CD8-positive, alpha-beta T cell (primary cell): ENCODE measurements at regions of chr9 and their contacts with region 1.

Region 1: DNA sequence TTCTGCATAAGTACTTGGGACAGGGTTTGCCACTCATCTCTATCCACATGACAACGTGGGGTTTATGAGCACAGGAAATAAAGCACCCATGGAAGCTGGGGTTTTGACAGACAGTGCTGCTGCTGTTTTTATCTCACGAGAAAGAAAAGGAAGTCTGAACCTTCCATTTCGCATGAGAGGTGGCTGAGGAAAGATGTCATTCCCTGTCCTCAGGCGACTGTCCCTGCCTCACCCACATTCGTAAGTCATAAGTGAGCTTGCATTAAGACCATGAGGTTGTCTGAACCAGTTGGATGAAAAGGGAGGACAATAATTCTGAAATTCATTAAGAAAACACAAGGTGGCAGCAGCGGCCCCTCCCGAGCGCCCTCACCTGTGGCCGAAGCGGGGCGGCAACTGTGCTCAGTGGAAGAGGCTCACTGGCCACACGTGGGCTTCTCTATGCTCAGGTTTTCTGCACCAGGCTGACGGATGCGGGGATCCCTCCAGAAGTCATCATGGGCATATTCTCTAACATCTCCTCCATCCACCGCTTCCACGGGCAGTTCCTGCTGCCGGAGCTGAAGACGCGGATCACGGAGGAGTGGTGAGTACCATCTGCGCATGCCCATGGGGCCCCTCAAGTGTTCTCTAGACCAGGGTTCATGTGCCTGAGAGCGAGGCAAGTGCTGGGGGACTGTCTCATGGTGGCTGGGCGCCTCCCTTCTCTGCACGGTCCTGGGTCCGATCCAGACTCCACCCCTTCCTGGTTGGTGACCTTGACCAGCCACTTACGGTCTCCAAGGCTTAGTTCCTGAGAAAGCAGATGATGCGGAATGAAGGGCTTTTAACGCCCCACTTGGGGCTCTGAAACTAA is 54.7 kb upstream of the SUSD3 start:
- DNase-seq: peak in 8 of 9 experiments; percentile 41 to 80 (median 70)
- ATAC-seq: peak; percentile 77
- H3K4me3 ChIP-seq: no peak overlapping the region
- H3K4me3 Mint-ChIP-seq: peak overlapping the region; percentile 5
- H3K27ac ChIP-seq: peak overlapping the region; percentile 23 to 41
- H3K27ac Mint-ChIP-seq: peak overlapping the region; percentile 92
- H3K4me1 ChIP-seq: peaks cover 52% of the 10 kb centered on the region
- H3K4me1 Mint-ChIP-seq: peaks cover 54% of the 10 kb centered on the region
- H3K27me3 ChIP-seq: no peaks in the 10 kb centered on the region
- H3K27me3 Mint-ChIP-seq: no peaks in the 10 kb centered on the region
- CTCF ChIP-seq: peak; percentile 56

Region 2: DNA sequence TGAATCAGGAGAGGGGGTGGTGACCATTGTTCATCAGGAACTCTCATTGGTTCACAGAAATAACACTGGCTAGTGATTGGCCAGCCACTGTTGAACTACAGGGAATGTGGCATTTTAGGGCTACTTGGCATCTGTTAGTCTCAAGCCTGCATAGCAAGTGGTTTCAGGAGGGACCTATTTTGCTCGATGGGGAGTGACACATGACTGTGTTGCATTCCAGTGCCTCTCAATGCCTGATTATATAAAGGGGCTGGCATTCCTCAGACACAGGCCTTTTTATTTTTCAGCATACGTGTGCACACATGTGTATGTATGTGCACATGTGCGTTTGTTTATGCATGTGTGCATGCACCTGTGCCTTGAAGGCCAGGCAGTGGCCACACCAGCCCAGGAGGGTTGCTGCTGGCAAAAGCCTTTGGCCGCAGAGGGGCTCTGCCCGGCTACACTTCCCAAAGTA is 33.3 kb before region 1 on chr9:
- CTCF ChIA-PET with region 1: interaction called, 28 read pairs
- POLR2A ChIA-PET with region 1: interaction called, 30 read pairs
- intact Hi-C with region 1: loop called in 1 of 2 experiments (anchors 2 kb)
- DNase-seq: peak in 3 of 9 experiments; percentile 12 to 50 (median 39)
- ATAC-seq: no peak
- H3K4me3 ChIP-seq: peak overlapping the region in 1 of 2 experiments; percentile 59
- H3K4me3 Mint-ChIP-seq: peak overlapping the region; percentile 91
- H3K27ac ChIP-seq: peak overlapping the region; percentile 91 to 94
- H3K27ac Mint-ChIP-seq: peak overlapping the region; percentile 100
- H3K4me1 ChIP-seq: peaks cover 78% of the 10 kb centered on the region
- H3K4me1 Mint-ChIP-seq: peaks cover 80% of the 10 kb centered on the region
- H3K27me3 ChIP-seq: no peaks in the 10 kb centered on the region
- H3K27me3 Mint-ChIP-seq: no peaks in the 10 kb centered on the region
- CTCF ChIP-seq: no peak

Region 3: GRCh38 chr9:92992549-92992948 is 11.2 kb before region 1 on chr9:
- CTCF ChIA-PET with region 1: interaction called, 29 read pairs
- POLR2A ChIA-PET with region 1: interaction called, 6 read pairs
- intact Hi-C with region 1: no loop called
- DNase-seq: no peak
- ATAC-seq: peak; percentile 16
- H3K4me3 ChIP-seq: no peak overlapping the region
- H3K4me3 Mint-ChIP-seq: no peak overlapping the region
- H3K27ac ChIP-seq: peak overlapping the region in 1 of 2 experiments; percentile 27
- H3K27ac Mint-ChIP-seq: peak overlapping the region; percentile 82
- H3K4me1 ChIP-seq: peaks cover 53% of the 10 kb centered on the region
- H3K4me1 Mint-ChIP-seq: peaks cover 95% of the 10 kb centered on the region
- H3K27me3 ChIP-seq: no peaks in the 10 kb centered on the region
- H3K27me3 Mint-ChIP-seq: no peaks in the 10 kb centered on the region
- CTCF ChIP-seq: no peak

Region 4: DNA sequence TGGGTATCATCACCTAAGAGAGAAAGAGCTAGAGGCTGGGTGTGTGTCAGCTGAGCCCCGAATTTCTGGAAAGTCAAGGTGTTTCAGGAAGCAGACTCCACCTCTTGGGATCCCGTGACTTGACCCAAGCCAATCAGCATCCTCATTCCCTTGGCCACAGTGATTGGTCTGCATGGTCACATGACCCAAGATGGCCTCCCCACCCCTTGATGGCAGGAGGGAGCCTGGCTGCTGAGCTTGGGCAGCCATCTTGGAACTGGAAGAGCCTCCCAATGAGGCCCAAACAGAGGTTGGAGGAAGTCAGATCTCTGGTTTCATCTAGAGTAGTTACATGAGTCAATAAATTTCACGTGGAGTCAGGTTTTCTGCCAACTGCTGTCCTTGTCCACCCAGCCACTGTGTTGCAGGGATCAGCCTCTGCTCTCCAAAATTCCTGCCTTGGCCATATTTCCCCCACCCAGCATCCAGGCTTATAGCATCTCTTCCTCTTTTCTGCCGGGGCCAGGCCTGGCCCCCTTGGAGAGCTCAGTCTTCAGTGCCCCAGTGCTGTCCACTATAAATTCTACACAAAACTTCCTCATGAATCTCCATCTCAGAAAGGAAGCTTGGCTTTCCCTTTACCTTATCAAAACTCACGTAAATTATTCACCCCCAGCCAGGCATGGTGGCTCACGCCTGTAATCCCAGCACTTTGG is 37.5 kb after region 1 on chr9:
- CTCF ChIA-PET with region 1: interaction called, 10 read pairs
- POLR2A ChIA-PET with region 1: interaction called, 5 read pairs
- intact Hi-C with region 1: no loop called
- DNase-seq: peak in 1 of 9 experiments; percentile 50
- ATAC-seq: no peak
- H3K4me3 ChIP-seq: no peak overlapping the region
- H3K4me3 Mint-ChIP-seq: no peak overlapping the region
- H3K27ac ChIP-seq: peak overlapping the region in 1 of 2 experiments; percentile 28
- H3K27ac Mint-ChIP-seq: peak overlapping the region; percentile 79
- H3K4me1 ChIP-seq: peaks cover 53% of the 10 kb centered on the region
- H3K4me1 Mint-ChIP-seq: peaks cover 67% of the 10 kb centered on the region
- H3K27me3 ChIP-seq: no peaks in the 10 kb centered on the region
- H3K27me3 Mint-ChIP-seq: no peaks in the 10 kb centered on the region
- CTCF ChIP-seq: no peak

Region 5: GRCh38 chr9:93064392-93065134 is 60.8 kb after region 1 on chr9:
- CTCF ChIA-PET with region 1: interaction called, 11 read pairs
- POLR2A ChIA-PET with region 1: interaction called, 8 read pairs
- intact Hi-C with region 1: no loop called
- DNase-seq: peak; percentile 78 to 97 (median 89)
- ATAC-seq: peak; percentile 89
- H3K4me3 ChIP-seq: peak overlapping the region; percentile 24 to 91
- H3K4me3 Mint-ChIP-seq: peak overlapping the region; percentile 83
- H3K27ac ChIP-seq: peak overlapping the region; percentile 70 to 83
- H3K27ac Mint-ChIP-seq: peak overlapping the region; percentile 100
- H3K4me1 ChIP-seq: peaks cover 94% of the 10 kb centered on the region
- H3K4me1 Mint-ChIP-seq: peaks cover 88% of the 10 kb centered on the region
- H3K27me3 ChIP-seq: no peaks in the 10 kb centered on the region
- H3K27me3 Mint-ChIP-seq: no peaks in the 10 kb centered on the region
- CTCF ChIP-seq: no peak

Region 6: GRCh38 chr9:93108291-93109041 is 104.7 kb after region 1 on chr9:
- CTCF ChIA-PET with region 1: interaction called, 16 read pairs
- POLR2A ChIA-PET with region 1: no interaction called
- intact Hi-C with region 1: no loop called
- DNase-seq: peak in 1 of 9 experiments; percentile 26
- ATAC-seq: no peak
- H3K4me3 ChIP-seq: no peak overlapping the region
- H3K4me3 Mint-ChIP-seq: no peak overlapping the region
- H3K27ac ChIP-seq: no peak overlapping the region
- H3K27ac Mint-ChIP-seq: no peak overlapping the region
- H3K4me1 ChIP-seq: peaks cover 47% of the 10 kb centered on the region
- H3K4me1 Mint-ChIP-seq: peaks cover 37% of the 10 kb centered on the region
- H3K27me3 ChIP-seq: no peaks in the 10 kb centered on the region
- H3K27me3 Mint-ChIP-seq: no peaks in the 10 kb centered on the region
- CTCF ChIP-seq: no peak

Region 7: DNA sequence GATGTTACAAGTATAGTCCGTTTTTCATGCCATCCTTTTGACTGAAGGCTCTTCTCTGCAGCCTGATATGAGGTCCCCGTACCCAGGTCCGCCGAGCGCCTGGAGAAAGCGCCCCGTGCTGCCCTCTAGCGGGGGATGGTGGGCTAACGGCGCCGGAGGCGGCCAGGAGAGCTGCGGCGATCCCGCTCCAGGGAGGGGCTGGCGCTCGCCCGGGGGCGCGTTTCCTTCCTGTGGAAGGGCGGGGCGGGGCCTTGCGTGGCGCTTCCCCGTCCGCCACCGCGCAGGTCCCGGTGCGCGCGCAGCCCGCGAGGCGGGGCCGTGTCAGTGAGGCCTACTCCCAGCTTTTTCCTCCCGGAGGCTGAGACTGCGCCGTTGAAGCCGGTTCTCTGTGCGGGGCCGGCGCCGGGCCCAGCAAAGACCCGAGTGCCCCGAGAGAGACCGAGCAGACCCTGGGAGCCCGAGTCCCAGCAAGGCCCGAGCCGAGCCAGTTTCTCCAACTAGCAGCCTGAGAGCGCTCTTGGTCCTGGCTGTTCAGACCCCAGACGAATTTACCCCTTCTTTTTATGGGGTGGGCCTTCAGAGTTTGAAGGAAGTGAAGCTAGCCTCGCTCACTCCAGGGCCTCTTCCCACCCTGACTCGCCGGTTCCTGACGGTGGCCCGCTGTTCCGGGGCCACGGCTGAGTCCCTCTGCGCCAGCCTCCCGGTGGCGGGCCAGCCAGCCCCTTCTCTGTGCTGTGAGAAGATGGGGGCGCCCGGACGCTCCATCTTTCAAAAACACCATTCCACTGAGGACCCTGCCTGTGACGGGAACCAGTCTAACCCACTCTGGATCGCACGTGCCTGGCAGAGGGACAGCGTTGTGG is 562.9 kb after region 1 on chr9:
- CTCF ChIA-PET with region 1: no interaction called
- POLR2A ChIA-PET with region 1: no interaction called
- intact Hi-C with region 1: loop called in 1 of 2 experiments (anchors 10 kb)
- DNase-seq: peak; percentile 97 to 100 (median 99)
- ATAC-seq: peak; percentile 97
- H3K4me3 ChIP-seq: peak overlapping the region; percentile 65 to 72
- H3K4me3 Mint-ChIP-seq: peak overlapping the region; percentile 84
- H3K27ac ChIP-seq: peak overlapping the region; percentile 79 to 94
- H3K27ac Mint-ChIP-seq: peak overlapping the region; percentile 98
- H3K4me1 ChIP-seq: peaks cover 15% of the 10 kb centered on the region
- H3K4me1 Mint-ChIP-seq: peaks cover 18% of the 10 kb centered on the region
- H3K27me3 ChIP-seq: no peaks in the 10 kb centered on the region
- H3K27me3 Mint-ChIP-seq: no peaks in the 10 kb centered on the region
- CTCF ChIP-seq: peak; percentile 95